Mammary epithelial cell (primary cell): ENCODE measurements at regions of chr19 and their contacts with region 1.

Region 1: DNA sequence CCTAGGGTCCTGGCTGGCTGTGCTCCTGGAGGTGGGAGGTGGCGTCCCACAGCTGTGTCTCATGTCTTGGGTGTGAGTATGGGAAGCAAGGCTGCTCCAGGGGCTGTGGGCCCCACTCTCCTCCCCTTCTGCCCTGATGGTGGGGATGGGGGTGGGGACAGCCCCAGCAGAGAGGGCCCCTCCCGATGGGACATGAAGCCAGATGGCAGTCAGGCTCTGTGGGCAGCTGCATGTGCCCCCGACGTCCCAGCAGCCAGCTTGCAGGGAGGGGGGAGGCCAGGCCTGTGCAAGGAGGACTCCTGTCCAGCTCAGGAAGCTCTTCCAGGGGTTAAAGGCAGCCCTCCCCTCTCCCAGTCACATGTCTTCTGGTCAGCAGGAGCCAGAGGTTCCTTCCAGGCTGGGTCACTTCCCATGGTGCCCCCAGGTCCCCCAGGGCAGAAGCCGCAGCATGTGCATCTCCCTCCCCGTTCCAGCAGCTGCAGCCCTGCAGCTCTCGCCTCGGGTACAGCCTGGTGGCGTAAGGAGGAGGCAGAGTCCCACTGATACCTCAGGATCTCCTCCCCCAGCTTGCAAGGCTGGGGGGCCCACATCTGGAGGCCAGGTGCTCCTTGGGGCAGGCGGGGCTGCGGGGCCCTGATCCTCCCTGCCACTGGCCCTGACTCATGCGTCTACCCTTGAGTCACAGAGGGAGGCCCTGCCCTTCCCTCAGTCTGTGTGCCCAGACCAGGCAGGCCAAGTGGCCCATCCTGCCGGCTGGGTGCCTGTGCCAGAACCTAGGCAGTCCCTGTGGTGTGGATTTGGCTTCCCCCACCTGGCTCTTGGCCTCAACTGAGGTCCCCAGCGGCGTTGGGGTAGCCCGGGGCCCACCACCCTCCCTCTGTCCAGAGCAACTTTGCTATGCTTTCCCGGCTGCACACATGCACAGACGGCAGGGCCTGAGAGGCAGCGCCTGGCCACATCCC is 13.0 kb downstream of the YIPF2 start:
- DNase-seq: peak; percentile 75
- H3K4me3 ChIP-seq: no peak overlapping the region
- H3K27ac ChIP-seq: no peak overlapping the region
- H3K4me1 ChIP-seq: peaks cover 14% of the 10 kb centered on the region
- H3K27me3 ChIP-seq: no peaks in the 10 kb centered on the region
- CTCF ChIP-seq: no peak

Region 2: GRCh38 chr19:10780368-10780767 is 135.0 kb before region 1 on chr19:
- CTCF ChIA-PET with region 1: no interaction called
- dilution Hi-C with region 1: no loop called
- in situ Hi-C with region 1: no loop called
- intact Hi-C with region 1: no loop called
- DNase-seq: no peak
- H3K4me3 ChIP-seq: no peak overlapping the region
- H3K27ac ChIP-seq: no peak overlapping the region
- H3K4me1 ChIP-seq: no peaks in the 10 kb centered on the region
- H3K27me3 ChIP-seq: no peaks in the 10 kb centered on the region
- CTCF ChIP-seq: no peak

Region 3: GRCh38 chr19:10820173-10820572 is 95.2 kb before region 1 on chr19:
- CTCF ChIA-PET with region 1: no interaction called
- dilution Hi-C with region 1: loop called (anchors 10 kb)
- in situ Hi-C with region 1: no loop called
- intact Hi-C with region 1: no loop called
- DNase-seq: no peak
- H3K4me3 ChIP-seq: no peak overlapping the region
- H3K27ac ChIP-seq: no peak overlapping the region
- H3K4me1 ChIP-seq: no peaks in the 10 kb centered on the region
- H3K27me3 ChIP-seq: no peaks in the 10 kb centered on the region
- CTCF ChIP-seq: peak in 1 of 2 donors; percentile 15

Region 4: DNA sequence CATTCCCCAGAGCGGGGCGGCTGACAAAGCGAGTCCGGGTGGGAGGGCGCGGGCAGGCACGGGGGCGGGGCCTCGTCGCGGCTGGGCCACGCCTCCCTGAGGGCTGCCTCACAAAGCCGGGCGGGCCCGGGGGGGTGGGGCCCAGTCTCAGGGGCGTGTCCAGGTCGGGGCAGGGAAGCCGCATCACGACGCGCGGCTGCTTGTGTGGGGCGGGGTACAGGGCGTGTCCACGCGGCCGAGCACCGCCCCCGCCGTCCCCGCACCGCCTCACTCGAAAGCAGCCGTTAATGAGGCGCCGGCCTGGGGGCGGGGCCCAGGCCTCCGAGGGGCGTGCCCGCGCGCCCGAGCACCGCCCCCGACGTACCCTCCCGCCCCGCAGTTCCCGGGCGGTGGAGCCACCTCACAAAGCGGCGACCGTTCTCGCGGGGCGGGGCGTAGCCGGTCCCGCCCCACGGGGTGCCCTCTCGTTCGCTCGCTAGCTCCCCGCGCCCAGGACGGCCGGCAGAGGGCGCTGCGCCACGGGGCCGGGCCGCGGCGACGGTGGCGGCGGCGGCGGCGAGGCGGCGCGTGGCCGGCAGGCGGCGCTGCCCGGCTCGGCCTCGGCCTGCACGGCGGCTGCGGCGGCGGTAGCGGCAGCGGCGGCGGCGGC is 44.3 kb before region 1 on chr19 and contains the start of gene CARM1:
- CTCF ChIA-PET with region 1: no interaction called
- dilution Hi-C with region 1: loop called (anchors 5 kb)
- in situ Hi-C with region 1: no loop called
- intact Hi-C with region 1: loop called (anchors 1 kb)
- DNase-seq: peak; percentile 97
- H3K4me3 ChIP-seq: peak within 1 kb of the TSS; percentile 78 to 90 (median 85)
- H3K27ac ChIP-seq: peak within 1 kb of the TSS; percentile 51
- H3K4me1 ChIP-seq: peaks cover 4% of the 10 kb centered on the region
- H3K27me3 ChIP-seq: no peaks in the 10 kb centered on the region
- CTCF ChIP-seq: peak; percentile 49 to 60
- total RNA-seq, gene CARM1: 29.2 to 58.5 TPM

Region 5: DNA sequence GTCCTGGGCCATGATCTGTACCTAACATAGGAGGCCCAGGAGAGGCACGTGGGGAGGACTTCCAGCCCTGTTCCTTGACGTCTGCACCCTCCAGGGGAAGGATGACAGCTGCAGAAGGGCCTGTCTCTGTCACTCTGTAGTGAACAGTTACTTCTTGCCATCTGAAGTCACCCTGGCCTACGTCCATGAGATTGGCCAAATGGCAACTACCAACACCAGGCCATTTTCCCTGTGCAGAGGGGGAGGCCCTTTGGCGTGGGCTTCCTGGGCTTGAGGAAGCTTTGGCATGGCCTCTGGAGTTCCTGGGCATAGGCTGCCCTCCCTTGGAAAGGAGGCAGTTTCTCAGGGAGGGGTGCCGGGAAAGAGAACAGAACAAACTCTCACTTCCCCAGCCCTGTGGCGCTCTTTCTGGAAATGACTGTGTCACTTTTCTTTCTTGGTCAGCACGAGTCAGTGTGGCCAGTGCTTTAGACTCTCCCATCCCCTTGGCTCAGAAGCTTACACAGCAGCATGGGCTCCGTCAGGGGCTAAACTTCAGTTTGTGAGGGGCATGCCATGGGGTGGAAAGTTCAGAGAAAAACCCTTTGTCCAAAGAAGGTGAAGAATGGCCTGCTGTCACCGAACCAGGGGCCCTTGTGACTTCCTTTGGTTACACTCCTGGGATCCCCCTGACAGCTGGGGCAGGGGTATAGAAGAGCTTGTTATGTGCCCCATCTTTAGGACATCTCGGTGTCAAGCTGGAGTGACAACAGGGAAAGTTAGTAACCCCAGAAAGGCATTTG is 38.8 kb before region 1 on chr19:
- CTCF ChIA-PET with region 1: no interaction called
- dilution Hi-C with region 1: loop called (anchors 5 kb)
- in situ Hi-C with region 1: no loop called
- intact Hi-C with region 1: loop called (anchors 1 kb)
- DNase-seq: no peak
- H3K4me3 ChIP-seq: no peak overlapping the region
- H3K27ac ChIP-seq: no peak overlapping the region
- H3K4me1 ChIP-seq: peaks cover 8% of the 10 kb centered on the region
- H3K27me3 ChIP-seq: no peaks in the 10 kb centered on the region
- CTCF ChIP-seq: no peak

Region 6: GRCh38 chr19:10946964-10947657 is 31.7 kb after region 1 on chr19:
- CTCF ChIA-PET with region 1: no interaction called
- dilution Hi-C with region 1: no loop called
- in situ Hi-C with region 1: no loop called
- intact Hi-C with region 1: no loop called
- DNase-seq: no peak
- H3K4me3 ChIP-seq: no peak overlapping the region
- H3K27ac ChIP-seq: no peak overlapping the region
- H3K4me1 ChIP-seq: no peaks in the 10 kb centered on the region
- H3K27me3 ChIP-seq: no peaks in the 10 kb centered on the region
- CTCF ChIP-seq: no peak

Region 7: DNA sequence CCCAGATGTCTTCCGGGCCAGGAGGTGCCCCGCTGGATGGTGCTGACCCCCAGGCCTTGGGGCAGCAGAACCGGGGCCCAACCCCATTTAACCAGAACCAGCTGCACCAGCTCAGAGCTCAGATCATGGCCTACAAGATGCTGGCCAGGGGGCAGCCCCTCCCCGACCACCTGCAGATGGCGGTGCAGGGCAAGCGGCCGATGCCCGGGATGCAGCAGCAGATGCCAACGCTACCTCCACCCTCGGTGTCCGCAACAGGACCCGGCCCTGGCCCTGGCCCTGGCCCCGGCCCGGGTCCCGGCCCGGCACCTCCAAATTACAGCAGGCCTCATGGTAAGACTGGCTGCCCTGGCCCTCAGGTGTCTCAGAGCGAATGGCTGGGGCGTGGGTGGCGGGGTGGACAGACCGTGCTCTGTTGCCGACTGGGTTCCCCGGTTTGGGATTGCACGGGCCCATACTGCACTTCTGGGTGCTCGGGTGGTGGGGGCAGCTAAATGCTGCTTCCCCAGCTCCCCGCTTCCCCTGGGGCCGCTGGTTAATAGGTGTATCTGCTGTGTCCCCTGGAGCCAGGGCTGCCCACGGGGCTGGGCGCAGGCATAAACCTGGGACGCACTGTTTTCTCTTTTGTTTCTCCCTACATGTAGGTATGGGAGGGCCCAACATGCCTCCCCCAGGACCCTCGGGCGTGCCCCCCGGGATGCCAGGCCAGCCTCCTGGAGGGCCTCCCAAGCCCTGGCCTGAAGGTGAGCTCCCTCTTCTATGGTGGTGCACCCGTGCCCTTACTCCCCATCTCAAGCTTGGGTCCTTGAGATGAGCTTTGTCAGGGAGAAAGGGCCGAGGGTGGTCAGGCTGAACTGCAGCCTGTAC is 71.1 kb after region 1 on chr19:
- CTCF ChIA-PET with region 1: no interaction called
- dilution Hi-C with region 1: loop called (anchors 5 kb)
- in situ Hi-C with region 1: no loop called
- intact Hi-C with region 1: no loop called
- DNase-seq: no peak
- H3K4me3 ChIP-seq: no peak overlapping the region
- H3K27ac ChIP-seq: no peak overlapping the region
- H3K4me1 ChIP-seq: no peaks in the 10 kb centered on the region
- H3K27me3 ChIP-seq: no peaks in the 10 kb centered on the region
- CTCF ChIP-seq: no peak